CD8-positive, alpha-beta T cell (primary cell): ENCODE measurements at regions of chr10 and their contacts with region 1.

Region 1: DNA sequence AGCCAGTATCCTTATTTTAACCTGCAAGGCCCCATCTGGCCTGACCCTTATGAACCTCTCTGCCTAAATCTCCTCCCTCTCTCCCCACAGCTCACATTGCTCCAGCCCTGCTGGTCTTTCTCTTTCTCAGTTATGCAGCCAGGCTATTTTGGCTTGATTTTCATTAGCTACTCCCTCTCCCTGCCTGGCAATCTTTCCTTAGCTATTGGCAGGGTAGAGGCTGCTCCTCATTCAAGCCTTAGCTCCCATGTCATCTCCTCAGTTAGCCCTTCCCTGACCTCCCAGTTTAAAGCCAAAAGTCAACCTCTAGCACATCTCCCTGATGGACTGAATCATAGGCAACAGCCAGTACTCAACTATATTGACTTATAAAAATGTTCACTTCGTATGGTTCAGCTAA is 214.4 kb upstream of the CELF2 start:
- DNase-seq: no peak
- ATAC-seq: no peak
- H3K4me3 ChIP-seq: no peak overlapping the region
- H3K4me3 Mint-ChIP-seq: no peak overlapping the region
- H3K27ac ChIP-seq: no peak overlapping the region
- H3K27ac Mint-ChIP-seq: no peak overlapping the region
- H3K4me1 ChIP-seq: no peaks in the 10 kb centered on the region
- H3K4me1 Mint-ChIP-seq: no peaks in the 10 kb centered on the region
- H3K27me3 ChIP-seq: no peaks in the 10 kb centered on the region
- H3K27me3 Mint-ChIP-seq: peaks cover 9% of the 10 kb centered on the region
- CTCF ChIP-seq: no peak

Region 2: GRCh38 chr10:10772874-10773508 is 30.3 kb before region 1 on chr10:
- CTCF ChIA-PET with region 1: no interaction called
- POLR2A ChIA-PET with region 1: no interaction called
- intact Hi-C with region 1: loop called in 1 of 2 experiments (anchors 1 kb)
- DNase-seq: no peak
- ATAC-seq: no peak
- H3K4me3 ChIP-seq: no peak overlapping the region
- H3K4me3 Mint-ChIP-seq: no peak overlapping the region
- H3K27ac ChIP-seq: no peak overlapping the region
- H3K27ac Mint-ChIP-seq: no peak overlapping the region
- H3K4me1 ChIP-seq: no peaks in the 10 kb centered on the region
- H3K4me1 Mint-ChIP-seq: no peaks in the 10 kb centered on the region
- H3K27me3 ChIP-seq: no peaks in the 10 kb centered on the region
- H3K27me3 Mint-ChIP-seq: peaks cover 15% of the 10 kb centered on the region
- CTCF ChIP-seq: no peak

Region 3: DNA sequence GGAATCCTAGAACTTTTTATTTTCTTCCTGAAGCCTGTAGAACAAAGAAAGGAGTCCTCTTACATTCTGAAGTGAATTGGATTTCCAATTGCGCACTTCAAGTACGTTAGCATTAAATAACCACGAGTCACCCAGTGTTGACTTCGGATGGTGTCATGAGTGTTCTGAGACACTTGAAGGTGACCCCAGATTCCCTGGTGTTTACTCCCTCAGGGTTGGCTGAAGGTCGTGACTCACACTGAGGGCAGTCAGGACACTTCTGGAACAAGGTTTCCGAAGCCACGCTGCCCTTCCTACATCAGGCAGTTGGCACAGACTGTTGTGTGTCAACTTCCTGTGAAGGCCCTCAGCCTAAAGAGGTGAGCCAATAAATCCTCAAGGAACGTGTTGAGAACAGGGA is 27.8 kb after region 1 on chr10:
- CTCF ChIA-PET with region 1: no interaction called
- POLR2A ChIA-PET with region 1: no interaction called
- intact Hi-C with region 1: no loop called
- DNase-seq: no peak
- ATAC-seq: no peak
- H3K4me3 ChIP-seq: no peak overlapping the region
- H3K4me3 Mint-ChIP-seq: no peak overlapping the region
- H3K27ac ChIP-seq: no peak overlapping the region
- H3K27ac Mint-ChIP-seq: no peak overlapping the region
- H3K4me1 ChIP-seq: no peaks in the 10 kb centered on the region
- H3K4me1 Mint-ChIP-seq: no peaks in the 10 kb centered on the region
- H3K27me3 ChIP-seq: no peaks in the 10 kb centered on the region
- H3K27me3 Mint-ChIP-seq: peaks cover 10% of the 10 kb centered on the region
- CTCF ChIP-seq: no peak